ENCODE measurements at regions of chr13 and their contacts with region 1.

Region 1: DNA sequence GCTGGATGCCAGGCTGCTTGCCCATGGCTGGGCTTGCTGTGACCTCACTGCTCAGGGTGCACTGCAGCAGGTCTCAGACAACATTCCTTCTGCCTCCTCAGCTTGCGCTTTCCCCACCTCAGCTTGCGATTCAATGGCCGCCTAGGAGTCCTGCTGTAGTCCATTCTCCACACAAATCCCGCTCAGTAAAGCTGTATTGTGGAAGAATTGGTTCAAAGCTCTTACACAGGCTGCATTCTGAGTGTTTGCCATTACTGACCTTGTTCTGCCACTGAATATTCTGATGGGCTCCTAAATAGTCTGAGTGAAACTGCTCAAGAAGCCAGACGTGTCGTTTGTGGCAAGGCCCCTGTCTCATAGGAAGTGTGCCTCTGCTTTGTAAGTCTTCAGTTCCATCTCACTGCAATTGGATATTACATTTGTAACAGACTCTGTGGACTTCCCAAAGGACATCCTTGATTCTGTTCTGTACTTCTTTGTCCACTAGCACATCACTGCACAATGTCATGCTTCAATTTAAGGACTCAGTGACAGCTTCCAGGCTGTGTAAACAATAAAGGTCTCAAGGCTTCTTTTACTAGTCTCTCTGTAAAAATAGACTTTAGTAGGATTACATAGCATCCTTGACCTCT is 49.8 kb downstream of the KATNAL1 start:
- DNase-seq: peak in 2 of 5 donors; percentile 29 to 49
- ATAC-seq: peak; percentile 76 to 86 (median 81)
- H3K4me3 ChIP-seq: no peak overlapping the region
- H3K27ac ChIP-seq: peak overlapping the region in 9 of 12 donors; percentile 3 to 57 (median 28)
- H3K4me1 ChIP-seq: peaks cover 0 to 21% (median 9%) of the 10 kb centered on the region in 12 donors
- H3K27me3 ChIP-seq: no peaks in the 10 kb centered on the region
- CTCF ChIP-seq: no peak
- POLR2A ChIP-seq: no peak

Region 2: GRCh38 chr13:30276178-30276577 is 18.6 kb after region 1 on chr13:
- intact Hi-C with region 1: loop called in 1 of 10 experiments (anchors 2 kb)
- DNase-seq: no peak
- ATAC-seq: no peak
- H3K4me3 ChIP-seq: no peak overlapping the region
- H3K27ac ChIP-seq: no peak overlapping the region
- H3K4me1 ChIP-seq: peaks cover 0 to 9% (median 0%) of the 10 kb centered on the region in 12 donors
- H3K27me3 ChIP-seq: no peaks in the 10 kb centered on the region
- CTCF ChIP-seq: no peak
- POLR2A ChIP-seq: no peak

Region 3: DNA sequence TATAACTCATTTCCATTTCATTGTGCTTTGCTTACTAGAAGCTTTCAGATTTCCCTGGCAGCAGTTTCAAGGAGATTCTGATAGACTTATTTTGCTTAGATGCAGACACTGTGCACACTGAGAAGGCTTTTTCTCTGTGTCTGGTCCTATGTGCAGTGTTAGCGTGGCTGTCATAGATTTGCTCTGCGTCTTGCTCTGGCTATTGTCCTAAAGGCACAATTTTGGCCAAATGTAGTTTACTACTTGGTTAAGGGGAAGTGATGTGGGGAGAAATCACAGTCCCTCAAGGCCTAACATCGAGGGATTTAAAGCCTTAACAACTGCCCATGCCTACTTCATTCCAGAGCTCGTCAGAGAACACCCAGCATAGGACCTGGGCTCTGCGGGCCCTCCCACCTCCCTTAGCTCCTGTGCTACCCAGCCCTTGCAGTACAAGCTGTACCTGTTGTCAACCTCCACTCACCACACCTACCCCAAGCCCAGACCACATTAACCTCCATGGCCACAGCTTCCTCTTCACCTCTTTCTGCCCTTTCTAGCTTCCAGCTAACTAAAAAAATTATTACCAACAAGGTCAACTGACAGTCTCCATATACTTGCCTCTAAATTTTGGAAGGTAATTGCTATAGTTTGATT is 88.7 kb after region 1 on chr13:
- intact Hi-C with region 1: no loop called
- DNase-seq: no peak
- ATAC-seq: no peak
- H3K4me3 ChIP-seq: no peak overlapping the region
- H3K27ac ChIP-seq: peak overlapping the region in 1 of 12 donors; percentile 33
- H3K4me1 ChIP-seq: peaks cover 0 to 31% (median 13%) of the 10 kb centered on the region in 12 donors
- H3K27me3 ChIP-seq: no peaks in the 10 kb centered on the region
- CTCF ChIP-seq: no peak
- POLR2A ChIP-seq: no peak

Region 4: DNA sequence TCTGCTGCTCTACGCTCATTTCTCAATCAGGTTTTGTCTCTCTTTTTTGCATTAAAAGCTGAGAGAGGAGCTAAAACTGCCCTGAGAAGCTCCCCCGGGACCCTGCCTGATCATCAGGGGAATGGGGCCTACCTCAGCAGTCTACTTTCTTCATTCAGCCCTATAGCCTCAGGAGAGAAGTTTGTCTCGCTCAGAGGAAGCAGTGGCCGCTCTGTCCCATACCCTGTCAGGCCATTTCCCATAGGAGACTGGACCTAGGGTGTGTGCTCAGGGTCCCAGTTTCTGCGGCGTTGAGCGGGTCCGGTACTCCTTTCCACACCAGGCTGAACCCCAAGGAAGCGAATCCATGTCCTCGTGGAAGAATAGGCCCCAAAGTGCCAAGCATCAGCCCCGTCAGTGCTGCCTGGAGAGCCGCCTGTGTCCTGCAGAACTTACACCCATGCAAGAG is 186.4 kb after region 1 on chr13:
- intact Hi-C with region 1: loop called in 1 of 10 experiments (anchors 10 kb)
- DNase-seq: no peak
- ATAC-seq: no peak
- H3K4me3 ChIP-seq: no peak overlapping the region
- H3K27ac ChIP-seq: no peak overlapping the region
- H3K4me1 ChIP-seq: peaks cover 0 to 19% (median 11%) of the 10 kb centered on the region in 12 donors
- H3K27me3 ChIP-seq: no peaks in the 10 kb centered on the region
- CTCF ChIP-seq: no peak
- POLR2A ChIP-seq: no peak